H1 (cell line): ENCODE measurements at regions of chr15 and their contacts with region 1.

Region 1: DNA sequence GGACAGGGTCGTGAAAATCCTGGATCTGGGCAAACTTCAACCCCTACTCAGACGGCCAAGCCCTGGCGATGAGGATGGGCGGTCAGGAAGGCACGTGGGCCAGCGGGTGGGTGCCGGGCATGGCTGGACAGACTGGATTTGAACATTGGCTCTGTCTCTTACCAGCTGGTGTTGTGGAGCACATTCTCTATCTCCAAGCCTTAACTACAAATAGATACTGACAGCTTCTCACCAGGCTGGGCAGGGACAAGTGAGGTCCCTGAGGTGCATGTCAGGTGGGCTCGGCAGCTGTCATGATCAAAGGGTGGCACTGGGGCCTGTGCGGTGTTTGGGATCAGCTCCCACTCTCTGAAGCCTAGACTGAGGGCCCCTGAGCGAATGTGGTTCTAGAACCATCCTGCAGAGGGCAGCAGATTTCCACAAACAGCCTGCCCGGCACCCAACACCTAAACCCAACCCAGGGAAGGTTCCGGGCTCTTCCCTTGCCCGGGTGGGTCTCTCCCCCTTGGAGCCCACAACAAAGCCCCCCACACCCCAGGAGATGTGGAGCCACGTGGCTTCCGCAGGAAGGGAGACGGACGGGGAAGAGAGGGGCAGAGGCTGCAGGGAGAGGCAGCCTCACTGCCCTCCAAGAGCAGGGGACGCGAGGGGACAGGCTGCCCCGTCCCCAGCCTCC is 58.4 kb downstream of the RGMA start:
- DNase-seq: peak; percentile 56 to 90
- H3K4me3 ChIP-seq: no peak overlapping the region
- H3K27ac ChIP-seq: no peak overlapping the region
- H3K4me1 ChIP-seq: peaks cover 0 to 3% (median 0%) of the 10 kb centered on the region in 4 experiments; a peak in 3 of 7 replicates
- H3K27me3 ChIP-seq: no peaks in the 10 kb centered on the region
- CTCF ChIP-seq: peak; percentile 84 to 91 (median 85)
- EP300 ChIP-seq: no peak
- POLR2A ChIP-seq: no peak
- RAD21 ChIP-seq: peak; percentile 97

Region 2: DNA sequence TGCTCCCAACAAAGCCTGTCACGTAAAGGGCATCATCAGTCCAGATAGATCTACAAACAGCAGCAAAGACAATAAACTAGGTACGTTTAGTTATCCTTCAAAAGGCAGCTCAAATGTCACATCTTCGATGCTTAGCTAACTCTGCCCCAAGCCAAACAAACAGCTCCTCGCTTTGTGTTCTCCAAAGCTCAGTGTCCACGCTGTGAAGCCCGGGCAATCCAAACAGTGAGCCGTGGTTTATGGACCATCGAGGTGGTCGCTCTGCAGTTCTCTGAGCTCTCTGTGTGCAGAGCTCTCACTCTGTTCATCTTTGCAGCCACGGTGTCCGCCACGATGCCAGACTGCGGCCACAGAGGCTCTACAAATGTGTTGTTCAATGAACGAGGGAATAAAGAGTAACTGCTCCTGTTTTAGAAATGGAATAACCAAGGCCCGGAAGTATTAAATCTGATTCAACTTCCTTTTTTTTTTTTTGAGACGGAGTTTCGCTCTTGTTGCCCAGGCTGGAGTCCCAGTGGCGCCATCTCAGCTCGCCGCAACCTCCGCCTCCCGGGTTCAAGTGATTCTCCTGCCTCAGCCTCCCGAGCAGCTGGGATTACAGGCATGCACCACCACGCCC is 257.8 kb before region 1 on chr15:
- CTCF ChIA-PET with region 1: no interaction called
- POLR2A ChIA-PET with region 1: no interaction called
- DNase-seq: no peak
- H3K4me3 ChIP-seq: no peak overlapping the region
- H3K27ac ChIP-seq: no peak overlapping the region
- H3K4me1 ChIP-seq: no peaks in the 10 kb centered on the region
- H3K27me3 ChIP-seq: no peaks in the 10 kb centered on the region
- CTCF ChIP-seq: no peak
- EP300 ChIP-seq: no peak
- POLR2A ChIP-seq: no peak
- RAD21 ChIP-seq: no peak

Region 3: GRCh38 chr15:93018580-93018979 is 12.0 kb before region 1 on chr15:
- CTCF ChIA-PET with region 1: interaction called, 38 read pairs
- POLR2A ChIA-PET with region 1: interaction called, 4 read pairs
- DNase-seq: no peak
- H3K4me3 ChIP-seq: no peak overlapping the region
- H3K27ac ChIP-seq: no peak overlapping the region
- H3K4me1 ChIP-seq: no peaks in the 10 kb centered on the region
- H3K27me3 ChIP-seq: no peaks in the 10 kb centered on the region
- CTCF ChIP-seq: peak; percentile 34 to 63 (median 53); a peak in 3 of 4 replicates
- EP300 ChIP-seq: no peak
- POLR2A ChIP-seq: no peak
- RAD21 ChIP-seq: peak; percentile 44 to 56; a peak in 3 of 4 replicates

Region 4: DNA sequence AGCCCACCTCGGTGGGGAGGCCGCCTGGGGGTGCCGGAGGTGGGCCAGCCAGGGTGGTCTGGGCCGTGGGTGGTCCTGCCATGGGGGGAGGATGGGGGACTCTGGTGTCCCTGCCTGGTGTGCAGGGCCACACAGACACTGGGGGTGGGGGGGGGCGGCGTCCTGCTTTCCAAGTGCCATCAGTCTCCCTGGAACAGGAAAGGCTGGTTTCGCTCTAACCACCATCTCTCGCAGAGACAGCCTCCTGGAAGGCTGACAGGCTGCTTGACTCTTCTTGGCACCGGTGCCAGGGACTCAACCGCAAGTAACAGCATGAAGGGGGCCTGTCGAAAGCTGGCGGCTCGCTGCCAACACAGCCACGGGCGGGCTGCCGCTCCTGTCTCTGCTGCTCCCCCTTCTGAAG is 18.2 kb after region 1 on chr15:
- CTCF ChIA-PET with region 1: interaction called, 119 read pairs
- POLR2A ChIA-PET with region 1: no interaction called
- DNase-seq: no peak
- H3K4me3 ChIP-seq: no peak overlapping the region
- H3K27ac ChIP-seq: no peak overlapping the region
- H3K4me1 ChIP-seq: no peaks in the 10 kb centered on the region; a peak in 1 of 7 replicates
- H3K27me3 ChIP-seq: no peaks in the 10 kb centered on the region
- CTCF ChIP-seq: no peak
- EP300 ChIP-seq: no peak
- POLR2A ChIP-seq: no peak
- RAD21 ChIP-seq: no peak

Region 5: DNA sequence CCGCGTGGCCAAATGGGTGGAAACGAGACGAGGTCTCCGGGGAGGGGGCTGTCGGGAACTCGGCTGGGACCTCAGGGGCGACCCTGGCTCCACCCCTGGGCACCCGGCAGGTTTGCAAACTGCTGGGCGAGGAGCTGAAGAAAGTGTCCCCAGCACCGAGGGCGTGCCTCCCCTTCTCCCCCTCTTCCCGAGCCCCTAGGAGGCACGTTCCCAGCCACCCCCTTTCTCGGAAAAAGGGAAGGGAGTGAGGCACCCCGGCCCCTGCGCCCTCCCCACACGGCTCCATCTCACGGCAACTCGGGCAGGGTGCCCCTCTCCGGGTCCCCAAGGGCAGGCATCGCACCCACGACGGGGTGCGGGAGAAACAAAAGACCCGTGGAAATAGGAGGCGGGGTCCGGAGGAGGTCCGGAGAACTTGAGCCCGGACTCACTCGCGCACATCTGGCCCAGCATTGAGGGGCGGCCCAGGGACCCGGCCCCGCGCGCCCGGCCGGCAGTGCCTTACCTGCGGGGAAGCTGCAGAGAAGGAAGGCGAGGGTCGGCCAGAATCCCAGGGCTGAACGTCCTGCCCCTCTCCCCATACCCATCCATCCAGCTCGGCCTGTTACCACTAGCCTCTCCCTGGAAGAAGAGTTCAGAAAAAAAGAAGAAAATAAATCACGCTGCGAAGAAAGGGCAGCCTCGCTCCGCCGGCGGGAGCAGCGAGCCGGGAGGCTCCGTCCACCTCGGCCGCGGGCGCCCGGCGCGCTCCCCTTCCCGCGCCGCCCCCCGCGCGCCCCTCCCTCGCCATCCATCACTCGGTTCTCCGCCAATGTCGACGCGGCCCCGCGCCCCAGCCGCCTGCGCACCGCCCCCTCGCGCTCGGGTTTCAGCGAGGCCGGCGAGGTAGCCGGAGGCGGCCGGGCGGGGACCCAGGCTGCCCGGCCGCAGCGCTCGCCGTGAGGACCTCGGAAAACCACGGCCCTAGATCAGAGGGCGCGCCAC is 42.1 kb after region 1 on chr15:
- CTCF ChIA-PET with region 1: interaction called, 11 read pairs
- POLR2A ChIA-PET with region 1: interaction called, 3 read pairs
- DNase-seq: peak in 1 of 2 experiments; percentile 86
- H3K4me3 ChIP-seq: peak overlapping the region; percentile 66 to 94 (median 88)
- H3K27ac ChIP-seq: peak overlapping the region; percentile 74; the same call in 1 of the 2 replicates
- H3K4me1 ChIP-seq: peaks cover 10 to 36% (median 23%) of the 10 kb centered on the region in 4 experiments
- H3K27me3 ChIP-seq: peaks cover 0 to 8% (median 7%) of the 10 kb centered on the region in 4 experiments; a peak in 5 of 7 replicates
- CTCF ChIP-seq: no peak
- EP300 ChIP-seq: no peak
- POLR2A ChIP-seq: peak in 1 of 2 experiments; percentile 57; a peak in 1 of 3 replicates
- RAD21 ChIP-seq: no peak

Region 6: DNA sequence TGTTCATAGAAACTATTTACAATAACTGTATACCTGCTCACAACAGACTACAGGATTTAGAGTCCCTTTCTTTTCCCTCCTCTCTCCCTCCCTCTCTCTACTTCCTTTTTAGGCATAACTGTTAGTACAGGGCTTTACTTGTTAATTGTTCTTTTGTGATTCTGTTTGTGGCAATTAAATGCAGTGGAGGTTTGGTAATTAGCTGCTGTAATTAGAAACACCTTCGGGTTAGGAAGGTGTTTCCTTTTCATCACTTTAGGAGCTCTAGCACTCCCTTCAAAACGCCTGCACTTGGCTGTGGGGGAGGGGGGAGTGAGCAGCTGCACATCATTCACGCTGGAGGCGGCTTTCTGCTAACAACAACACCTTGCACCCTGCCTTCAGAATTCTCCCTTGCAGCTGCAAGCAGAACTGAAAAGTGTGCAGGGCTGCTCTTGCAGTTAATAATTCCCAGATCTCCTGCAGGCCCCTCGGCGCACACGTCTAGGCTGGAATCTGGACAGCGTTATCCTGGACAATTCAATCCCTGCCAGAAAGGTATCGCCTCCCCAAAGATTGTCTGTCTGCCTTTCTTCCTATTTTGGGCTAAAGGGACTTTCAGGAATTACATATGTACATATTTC is 301.1 kb after region 1 on chr15:
- CTCF ChIA-PET with region 1: interaction called, 13 read pairs
- POLR2A ChIA-PET with region 1: no interaction called
- DNase-seq: peak; percentile 59 to 69
- H3K4me3 ChIP-seq: peak overlapping the region; percentile 21 to 53 (median 33); a peak in 6 of 8 replicates
- H3K27ac ChIP-seq: no peak overlapping the region
- H3K4me1 ChIP-seq: peaks cover 8 to 23% (median 20%) of the 10 kb centered on the region in 4 experiments
- H3K27me3 ChIP-seq: peaks cover 5 to 44% (median 31%) of the 10 kb centered on the region in 4 experiments
- CTCF ChIP-seq: no peak
- EP300 ChIP-seq: peak in 1 of 2 experiments; percentile 66; a peak in 1 of 3 replicates
- POLR2A ChIP-seq: no peak
- RAD21 ChIP-seq: peak; percentile 11 to 34; a peak in 2 of 4 replicates